Endothelial cell of umbilical vein (primary cell): ENCODE measurements at regions of chr1 and their contacts with region 1.

Region 1: DNA sequence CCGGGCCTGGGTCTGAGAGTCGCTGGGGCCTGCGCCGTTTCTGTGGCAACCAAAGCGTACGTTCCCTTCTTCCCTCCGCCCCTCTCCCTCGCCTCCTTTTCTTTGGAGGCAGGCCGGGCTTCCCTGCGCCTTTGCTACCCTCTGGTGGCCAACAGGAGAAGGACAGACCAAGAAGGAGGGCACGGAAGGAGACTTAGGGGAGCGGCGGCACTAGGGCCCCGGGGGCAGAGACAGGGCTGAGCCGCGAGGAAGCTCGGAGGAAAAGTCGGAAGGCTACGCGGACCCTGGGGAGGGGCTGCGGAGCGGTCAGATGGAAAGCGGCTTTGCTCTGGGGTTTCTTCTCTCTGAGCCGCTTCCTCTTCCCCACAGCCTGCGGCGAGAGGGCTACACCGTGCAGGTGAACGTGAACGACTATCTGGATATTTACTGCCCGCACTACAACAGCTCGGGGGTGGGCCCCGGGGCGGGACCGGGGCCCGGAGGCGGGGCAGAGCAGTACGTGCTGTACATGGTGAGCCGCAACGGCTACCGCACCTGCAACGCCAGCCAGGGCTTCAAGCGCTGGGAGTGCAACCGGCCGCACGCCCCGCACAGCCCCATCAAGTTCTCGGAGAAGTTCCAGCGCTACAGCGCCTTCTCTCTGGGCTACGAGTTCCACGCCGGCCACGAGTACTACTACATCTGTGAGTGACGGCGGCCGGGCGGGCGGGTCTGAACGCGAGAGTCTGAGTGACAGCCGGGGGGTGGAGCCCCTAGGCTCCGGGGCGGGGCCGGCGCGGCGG is 6.3 kb downstream of the EFNA3 start:
- DNase-seq: peak; percentile 96
- H3K4me3 ChIP-seq: peak overlapping the region; percentile 13 to 68 (median 48)
- H3K27ac ChIP-seq: peak overlapping the region; percentile 45
- H3K4me1 ChIP-seq: peaks cover 12% of the 10 kb centered on the region
- H3K27me3 ChIP-seq: peaks cover 26 to 36% of the 10 kb centered on the region in 2 experiments
- CTCF ChIP-seq: peak; percentile 79 to 90
- POLR2A ChIP-seq: peak; percentile 31

Region 2: GRCh38 chr1:154418062-154418921 is 666.6 kb before region 1 on chr1:
- CTCF ChIA-PET with region 1: no interaction called
- POLR2A ChIA-PET with region 1: no interaction called
- dilution Hi-C with region 1: no loop called
- intact Hi-C with region 1: no loop called
- DNase-seq: peak; percentile 47
- H3K4me3 ChIP-seq: no peak overlapping the region
- H3K27ac ChIP-seq: no peak overlapping the region
- H3K4me1 ChIP-seq: peaks cover 32% of the 10 kb centered on the region
- H3K27me3 ChIP-seq: no peaks in the 10 kb centered on the region
- CTCF ChIP-seq: no peak
- POLR2A ChIP-seq: no peak

Region 3: DNA sequence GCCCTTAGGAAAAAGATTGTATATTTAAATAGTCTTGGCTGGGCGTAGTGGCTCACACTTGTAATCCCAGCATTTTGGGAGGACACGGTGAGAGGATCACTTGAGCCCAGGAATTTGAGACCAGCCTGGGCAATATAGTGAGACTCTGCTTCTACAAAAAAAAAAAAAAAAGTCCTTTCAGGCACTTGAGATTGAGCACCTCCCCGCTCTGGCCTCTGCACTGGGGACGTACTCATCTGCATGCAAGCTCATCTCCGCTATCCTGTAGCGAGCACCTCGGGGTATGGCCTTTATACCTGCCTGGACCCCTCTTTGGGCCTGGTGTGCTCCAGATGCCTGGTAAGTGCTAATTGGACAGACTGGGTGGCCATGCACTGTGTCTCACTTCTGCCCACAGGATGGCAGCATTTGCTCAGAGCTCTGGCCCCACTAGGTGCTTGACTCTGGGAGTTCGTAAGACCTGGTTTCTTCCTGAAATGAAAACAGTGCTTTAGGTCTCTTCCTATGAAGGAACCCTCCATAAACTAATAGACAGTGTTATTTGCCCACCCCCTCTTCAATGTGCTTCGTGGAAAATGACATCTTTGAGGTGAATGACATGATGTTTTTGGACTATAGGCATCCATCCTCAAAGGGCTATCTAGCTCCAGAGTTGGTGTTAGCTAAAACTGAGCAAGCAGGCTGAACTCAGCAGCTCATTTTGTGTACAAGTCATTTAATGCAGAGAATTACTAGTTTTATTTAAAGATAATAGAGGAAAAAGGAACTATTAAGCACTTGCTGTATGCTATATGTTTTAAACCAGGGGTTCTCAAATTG is 415.2 kb before region 1 on chr1:
- CTCF ChIA-PET with region 1: no interaction called
- POLR2A ChIA-PET with region 1: no interaction called
- dilution Hi-C with region 1: no loop called
- intact Hi-C with region 1: loop called (anchors 1 kb)
- DNase-seq: peak; percentile 88
- H3K4me3 ChIP-seq: no peak overlapping the region
- H3K27ac ChIP-seq: no peak overlapping the region
- H3K4me1 ChIP-seq: no peaks in the 10 kb centered on the region
- H3K27me3 ChIP-seq: no peaks in the 10 kb centered on the region
- CTCF ChIP-seq: peak; percentile 76 to 82
- POLR2A ChIP-seq: no peak

Region 4: GRCh38 chr1:154843605-154844296 is 241.2 kb before region 1 on chr1:
- CTCF ChIA-PET with region 1: no interaction called
- POLR2A ChIA-PET with region 1: no interaction called
- dilution Hi-C with region 1: no loop called
- intact Hi-C with region 1: no loop called
- DNase-seq: no peak
- H3K4me3 ChIP-seq: no peak overlapping the region
- H3K27ac ChIP-seq: no peak overlapping the region
- H3K4me1 ChIP-seq: peaks cover 14% of the 10 kb centered on the region
- H3K27me3 ChIP-seq: peaks cover 3 to 8% of the 10 kb centered on the region in 2 experiments
- CTCF ChIP-seq: no peak
- POLR2A ChIP-seq: no peak

Region 5: DNA sequence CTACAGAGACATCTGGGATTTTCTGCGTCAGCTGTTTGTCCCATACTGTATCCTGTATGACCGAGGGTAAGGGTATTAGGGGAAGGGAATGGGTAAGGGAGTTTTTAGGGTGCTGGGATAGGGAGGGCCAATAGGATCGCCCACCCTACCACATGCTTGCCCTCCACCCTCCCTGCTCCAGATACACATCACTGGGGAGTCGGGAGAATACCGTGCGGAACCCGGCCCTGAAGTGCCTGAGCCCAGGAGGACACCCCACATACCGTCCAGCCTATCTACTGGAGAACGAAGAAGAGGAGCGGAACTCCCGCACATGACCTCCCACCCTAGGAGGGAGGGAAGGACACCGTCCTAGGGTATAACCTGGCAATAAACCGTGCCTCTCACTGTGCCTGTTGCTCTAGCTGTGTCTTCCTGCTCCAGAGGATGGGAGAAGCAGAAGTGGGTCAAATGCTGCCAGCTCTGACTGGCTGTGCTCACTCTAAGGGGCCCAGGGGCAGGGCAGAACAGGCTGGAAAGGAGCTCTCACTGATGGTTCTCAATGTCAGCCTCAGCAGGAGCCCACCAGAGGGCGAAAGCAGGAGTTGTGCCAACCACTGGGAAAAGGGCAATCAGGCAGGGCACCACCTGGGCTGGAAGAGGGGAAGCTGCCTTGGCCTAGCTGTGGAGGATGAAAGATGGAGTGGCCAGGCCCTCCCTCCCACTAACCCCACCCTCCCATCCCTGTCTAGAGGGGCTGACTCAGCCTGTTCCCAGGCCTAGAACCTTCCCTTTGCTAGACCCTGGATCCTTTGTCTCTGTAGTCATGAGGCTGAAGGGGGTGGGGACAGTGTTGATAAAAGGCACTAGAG is 92.0 kb before region 1 on chr1:
- CTCF ChIA-PET with region 1: interaction called, 11 read pairs
- POLR2A ChIA-PET with region 1: no interaction called
- dilution Hi-C with region 1: no loop called
- intact Hi-C with region 1: no loop called
- DNase-seq: no peak
- H3K4me3 ChIP-seq: no peak overlapping the region
- H3K27ac ChIP-seq: no peak overlapping the region
- H3K4me1 ChIP-seq: peaks cover 2% of the 10 kb centered on the region
- H3K27me3 ChIP-seq: no peaks in the 10 kb centered on the region
- CTCF ChIP-seq: peak in 1 of 2 donors; percentile 40
- POLR2A ChIP-seq: no peak

Region 6: DNA sequence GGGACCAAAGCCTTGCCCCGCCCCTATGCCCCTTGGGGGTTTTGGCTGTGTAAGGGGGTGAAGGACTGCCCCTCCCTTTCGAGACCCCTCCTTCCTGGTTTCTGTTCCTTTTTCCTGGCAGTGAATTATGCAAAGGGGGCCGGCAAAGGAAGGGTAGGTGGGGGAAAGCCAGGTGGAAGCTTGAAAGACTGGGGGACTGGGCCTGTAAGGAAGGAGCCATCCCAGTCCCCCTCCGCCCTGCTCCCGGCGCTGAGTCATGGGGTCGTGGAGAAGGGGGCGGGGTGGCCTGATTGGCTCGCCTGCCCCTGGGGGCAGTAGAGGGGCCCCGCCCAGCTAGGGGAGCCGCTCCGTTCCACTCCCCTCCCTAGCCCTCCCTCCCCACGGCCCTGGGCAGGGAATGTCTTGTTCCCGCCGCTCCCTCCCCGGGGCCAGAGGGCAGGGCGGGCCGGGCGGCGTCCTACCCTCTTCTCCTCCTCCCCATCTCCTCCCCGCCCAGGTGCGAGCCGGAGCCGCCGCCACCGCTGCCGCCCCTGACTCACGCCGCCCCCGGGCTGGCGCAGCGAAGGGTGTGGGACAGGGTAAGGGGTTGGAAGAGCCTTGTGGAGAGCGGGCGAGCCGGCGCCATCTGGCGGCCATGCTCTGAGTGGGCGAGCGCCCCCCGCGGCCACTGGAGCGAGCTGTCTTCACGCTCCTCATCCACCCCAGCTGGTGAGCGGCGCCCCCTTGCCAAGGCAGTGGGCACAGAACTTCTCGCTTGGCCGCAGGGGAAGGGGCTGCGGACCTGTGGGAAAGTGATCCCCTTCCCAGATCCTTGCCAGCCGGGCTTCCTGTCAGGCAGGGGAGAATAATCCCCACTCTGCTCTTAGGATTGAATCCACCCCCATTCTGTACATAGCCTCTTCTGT is 67.6 kb before region 1 on chr1:
- CTCF ChIA-PET with region 1: interaction called, 13 read pairs
- POLR2A ChIA-PET with region 1: no interaction called
- dilution Hi-C with region 1: no loop called
- intact Hi-C with region 1: no loop called
- DNase-seq: peak; percentile 95
- H3K4me3 ChIP-seq: peak overlapping the region in 1 of 3 experiments; percentile 39
- H3K27ac ChIP-seq: peak overlapping the region; percentile 36
- H3K4me1 ChIP-seq: peaks cover 9% of the 10 kb centered on the region
- H3K27me3 ChIP-seq: no peaks in the 10 kb centered on the region
- CTCF ChIP-seq: peak; percentile 100
- POLR2A ChIP-seq: peak; percentile 57

Region 7: GRCh38 chr1:155050560-155051341 is 34.2 kb before region 1 on chr1 and contains the start of gene ADAM15:
- CTCF ChIA-PET with region 1: interaction called, 67 read pairs
- POLR2A ChIA-PET with region 1: interaction called, 4 read pairs
- dilution Hi-C with region 1: no loop called
- intact Hi-C with region 1: loop called (anchors 1 kb)
- DNase-seq: peak; percentile 81
- H3K4me3 ChIP-seq: peak within 1 kb of the TSS; percentile 66 to 75 (median 74)
- H3K27ac ChIP-seq: peak within 1 kb of the TSS; percentile 53
- H3K4me1 ChIP-seq: peaks cover 24% of the 10 kb centered on the region
- H3K27me3 ChIP-seq: no peaks in the 10 kb centered on the region
- CTCF ChIP-seq: peak; percentile 94 to 99
- POLR2A ChIP-seq: no peak
- total RNA-seq, gene ADAM15: 268 and 299 TPM in 2 replicates

Region 8: DNA sequence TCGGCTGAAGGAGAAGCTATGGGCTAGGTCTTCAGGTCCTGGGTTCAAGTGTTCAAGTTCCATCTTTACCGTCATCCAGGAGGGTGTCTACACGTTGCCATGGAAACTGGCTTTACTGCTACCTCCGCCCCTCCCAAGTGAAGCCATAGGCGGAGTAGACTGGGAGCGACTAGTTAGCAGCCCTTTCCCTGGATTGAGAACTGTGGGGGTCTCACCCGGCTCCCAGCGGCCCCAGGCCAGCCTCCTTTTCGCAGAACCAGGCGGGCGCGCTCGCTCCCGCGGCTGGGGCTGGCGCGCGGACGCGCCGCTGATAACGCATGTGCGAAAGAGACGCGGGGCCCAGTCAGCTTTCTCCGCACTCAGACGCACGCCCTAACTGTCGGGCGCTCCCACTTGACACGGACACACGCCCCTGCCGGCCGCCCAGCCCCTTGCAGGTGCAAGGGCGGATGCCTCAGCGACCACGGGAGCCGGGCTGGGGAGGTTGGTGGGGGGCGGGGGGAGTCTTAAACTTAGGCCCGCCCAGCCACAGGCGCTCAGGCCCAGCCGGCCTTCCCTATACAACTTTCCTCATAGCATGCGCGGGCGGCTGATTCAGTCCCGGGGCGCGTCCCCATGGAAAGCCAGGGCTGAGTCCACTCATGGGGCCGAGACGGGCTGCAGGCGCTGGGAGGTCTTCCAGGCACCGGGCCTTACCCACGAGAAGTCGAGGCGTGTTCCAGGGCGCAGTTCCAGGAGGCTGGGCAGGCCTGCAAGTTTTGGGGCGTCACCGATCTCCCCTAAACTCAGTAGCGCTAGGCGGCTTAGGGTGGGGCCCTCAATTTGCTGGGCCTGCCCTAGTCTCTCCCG is 14.0 kb before region 1 on chr1:
- CTCF ChIA-PET with region 1: interaction called, 49 read pairs
- POLR2A ChIA-PET with region 1: no interaction called
- dilution Hi-C with region 1: no loop called
- intact Hi-C with region 1: loop called (anchors 2 kb)
- DNase-seq: peak; percentile 71
- H3K4me3 ChIP-seq: peak overlapping the region in 2 of 3 experiments; percentile 19 to 37
- H3K27ac ChIP-seq: no peak overlapping the region
- H3K4me1 ChIP-seq: no peaks in the 10 kb centered on the region
- H3K27me3 ChIP-seq: peaks cover 0 to 4% of the 10 kb centered on the region in 2 experiments
- CTCF ChIP-seq: peak; percentile 17 to 67
- POLR2A ChIP-seq: no peak

Region 9: DNA sequence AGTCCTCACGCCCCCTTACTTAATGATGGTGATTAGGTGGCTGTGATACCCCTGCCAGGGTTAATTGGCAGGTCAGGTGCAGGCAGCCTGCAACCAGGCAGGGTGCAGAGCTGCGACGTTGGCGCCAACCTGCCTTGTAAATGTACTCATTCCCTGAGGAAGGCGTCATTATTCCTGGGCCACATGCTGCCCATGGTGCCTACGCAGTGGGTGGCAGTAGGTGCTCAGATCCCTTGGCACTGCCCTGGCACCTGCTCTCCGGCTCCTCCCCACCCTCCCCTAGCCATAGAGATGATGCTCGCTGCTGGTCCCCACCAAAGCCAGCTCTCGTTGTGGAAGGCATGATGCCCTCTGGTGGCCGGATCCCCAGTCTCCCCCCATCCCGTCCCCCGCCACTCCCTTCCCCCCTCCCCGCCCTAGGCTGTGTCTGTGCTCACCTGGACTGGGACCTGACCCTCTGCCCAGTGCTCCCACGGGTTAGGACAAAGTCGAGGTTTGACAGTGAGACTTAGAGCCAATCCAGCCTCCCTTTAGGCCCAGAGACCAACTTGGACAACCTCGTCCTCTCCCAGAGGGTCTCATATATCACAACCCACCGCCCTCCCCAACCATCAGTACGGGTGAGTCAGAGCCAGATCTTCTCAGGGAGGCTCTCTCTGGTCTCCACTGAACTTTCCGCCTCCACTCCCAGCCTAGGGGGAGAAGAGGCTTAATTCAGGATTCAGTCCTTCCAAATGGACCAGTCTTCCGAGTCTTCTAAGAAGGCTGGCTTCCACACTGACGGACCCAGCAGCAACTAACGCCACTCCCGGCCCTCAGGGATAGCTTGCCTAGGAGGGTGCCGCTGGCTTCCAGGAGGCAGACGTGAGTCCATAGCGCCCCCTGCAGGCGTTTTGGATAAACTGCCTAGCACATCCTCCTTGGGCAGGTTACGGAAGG is 82.5 kb after region 1 on chr1:
- CTCF ChIA-PET with region 1: interaction called, 673 read pairs
- POLR2A ChIA-PET with region 1: no interaction called
- dilution Hi-C with region 1: no loop called
- intact Hi-C with region 1: no loop called
- DNase-seq: peak; percentile 91
- H3K4me3 ChIP-seq: peak overlapping the region in 1 of 3 experiments; percentile 9
- H3K27ac ChIP-seq: peak overlapping the region; percentile 45
- H3K4me1 ChIP-seq: peaks cover 22% of the 10 kb centered on the region
- H3K27me3 ChIP-seq: no peaks in the 10 kb centered on the region
- CTCF ChIP-seq: peak; percentile 88 to 90
- POLR2A ChIP-seq: no peak

Region 10: GRCh38 chr1:155759966-155760630 is 675.2 kb after region 1 on chr1:
- CTCF ChIA-PET with region 1: no interaction called
- POLR2A ChIA-PET with region 1: no interaction called
- dilution Hi-C with region 1: no loop called
- intact Hi-C with region 1: no loop called
- DNase-seq: no peak
- H3K4me3 ChIP-seq: no peak overlapping the region
- H3K27ac ChIP-seq: no peak overlapping the region
- H3K4me1 ChIP-seq: peaks cover 11% of the 10 kb centered on the region
- H3K27me3 ChIP-seq: no peaks in the 10 kb centered on the region
- CTCF ChIP-seq: no peak
- POLR2A ChIP-seq: no peak